ENCODE measurements at regions of chr5 and their contacts with region 1.

Region 1: GRCh38 chr5:140926443-140927227 is 536 bp downstream of the PCDHAC1 start:
- DNase-seq: peak; percentile 92
- H3K27ac ChIP-seq: peak overlapping the region; percentile 59
- CTCF ChIP-seq: peak; percentile 98

Region 2: GRCh38 chr5:140664359-140665119 is 262.1 kb before region 1 on chr5 and contains the start of gene WDR55:
- CTCF ChIA-PET with region 1: no interaction called
- POLR2A ChIA-PET with region 1: no interaction called
- DNase-seq: peak; percentile 99
- H3K27ac ChIP-seq: peak within 1 kb of the TSS; percentile 94
- CTCF ChIP-seq: no peak

Region 3: GRCh38 chr5:140827704-140828361 is 98.8 kb before region 1 on chr5 and contains the start of gene PCDHA6:
- CTCF ChIA-PET with region 1: no interaction called
- POLR2A ChIA-PET with region 1: no interaction called
- DNase-seq: no peak
- H3K27ac ChIP-seq: no peak within 1 kb of the TSS
- CTCF ChIP-seq: no peak

Region 4: DNA sequence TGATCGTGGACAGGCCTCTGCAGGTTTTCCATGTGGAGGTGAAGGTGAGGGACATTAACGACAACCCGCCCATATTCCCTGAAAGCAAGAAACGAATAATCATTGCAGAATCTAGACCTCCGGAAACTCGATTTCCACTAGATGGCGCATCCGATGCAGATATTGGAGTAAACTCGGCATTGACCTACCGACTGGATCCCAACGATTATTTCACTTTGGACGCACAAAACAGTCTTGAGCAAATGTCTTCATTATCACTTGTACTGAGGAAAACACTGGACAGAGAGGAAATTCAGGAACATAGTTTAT is 44.1 kb before region 1 on chr5:
- CTCF ChIA-PET with region 1: interaction called, 15 read pairs
- POLR2A ChIA-PET with region 1: no interaction called
- DNase-seq: peak; percentile 62
- H3K27ac ChIP-seq: no peak overlapping the region
- CTCF ChIP-seq: no peak

Region 5: DNA sequence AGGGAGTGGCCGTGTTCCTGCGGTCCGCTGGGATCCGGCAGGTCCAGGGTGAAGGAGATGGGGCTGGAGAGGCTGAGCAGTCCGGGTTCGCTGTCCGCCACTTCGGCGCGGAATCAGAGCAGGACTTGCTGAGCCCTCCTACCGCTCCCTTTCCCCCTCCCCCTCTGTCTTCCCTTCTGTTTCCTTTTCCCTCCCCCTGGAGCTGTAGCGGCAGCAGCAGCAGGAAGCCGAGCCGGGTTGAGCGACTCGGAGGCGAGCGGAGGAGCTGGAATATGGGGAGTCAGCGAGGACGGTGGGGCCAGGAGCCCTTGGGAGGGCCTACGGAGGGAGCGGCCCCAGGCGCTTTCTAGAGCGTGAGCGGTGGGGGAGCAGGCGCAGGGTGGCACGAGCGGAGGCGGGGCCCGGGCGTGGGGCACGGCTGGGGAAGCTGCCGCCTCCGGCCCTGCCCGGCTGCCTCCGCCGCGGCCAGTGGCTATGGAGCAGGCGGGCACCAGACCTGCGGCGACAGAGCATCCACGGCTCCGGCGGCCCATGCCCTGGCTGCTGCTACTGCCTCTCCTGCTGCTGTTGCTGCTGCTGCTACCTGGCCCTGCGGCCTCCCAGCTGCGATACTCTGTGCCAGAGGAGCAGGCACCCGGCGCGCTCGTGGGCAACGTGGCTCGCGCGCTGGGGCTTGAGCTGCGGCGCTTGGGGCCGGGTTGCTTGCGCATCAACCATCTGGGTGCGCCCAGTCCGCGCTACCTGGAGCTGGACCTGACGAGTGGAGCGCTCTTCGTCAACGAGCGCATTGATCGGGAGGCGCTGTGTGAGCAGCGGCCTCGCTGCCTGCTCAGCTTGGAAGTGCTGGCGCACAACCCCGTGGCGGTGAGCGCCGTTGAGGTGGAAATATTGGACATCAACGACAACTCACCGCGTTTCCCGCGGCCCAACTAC is 39.9 kb after region 1 on chr5 and contains the start of gene PCDHAC2:
- CTCF ChIA-PET with region 1: interaction called, 27 read pairs
- POLR2A ChIA-PET with region 1: interaction called, 13 read pairs
- DNase-seq: peak; percentile 62
- H3K27ac ChIP-seq: peak within 1 kb of the TSS; percentile 87
- CTCF ChIP-seq: no peak

Region 6: DNA sequence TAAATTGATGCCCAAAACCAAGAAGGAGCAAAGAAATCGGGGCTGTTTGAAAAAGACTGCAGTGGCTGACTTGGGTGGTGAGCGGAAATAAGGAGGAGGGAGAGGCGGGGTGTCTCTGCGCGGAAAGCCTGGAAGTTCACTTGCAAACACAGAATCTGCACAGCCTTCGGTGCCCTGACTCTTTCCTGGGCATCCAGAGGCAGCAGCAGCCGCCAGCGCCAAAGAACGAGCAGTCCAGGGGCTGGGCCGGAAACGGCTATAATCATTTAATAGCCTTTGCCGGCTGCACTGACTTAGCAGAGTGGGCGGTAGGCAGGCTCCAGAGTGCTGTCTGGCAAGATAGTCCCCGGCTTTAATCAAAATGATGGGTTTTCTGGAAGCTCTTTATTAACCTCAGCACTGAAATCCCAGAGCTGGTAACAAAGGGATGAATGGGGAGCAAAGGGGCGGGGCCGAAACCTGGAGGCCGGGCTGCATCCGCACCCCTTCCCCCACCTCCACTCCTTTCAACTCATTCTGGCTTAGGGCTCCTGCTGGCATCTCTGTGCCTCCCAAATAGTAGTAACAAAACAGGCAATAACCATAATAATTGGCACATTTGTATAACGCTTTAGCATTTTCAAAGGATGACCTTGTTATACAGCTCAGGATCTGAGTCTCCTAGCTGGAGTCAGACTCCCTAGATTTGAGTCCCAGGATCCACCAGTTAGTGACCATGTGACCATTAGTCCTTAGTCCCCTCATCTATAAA is 75.4 kb after region 1 on chr5:
- CTCF ChIA-PET with region 1: interaction called, 12 read pairs
- POLR2A ChIA-PET with region 1: no interaction called
- DNase-seq: peak; percentile 72
- H3K27ac ChIP-seq: peak overlapping the region; percentile 98
- CTCF ChIP-seq: no peak